ENCODE measurements at regions of chr4 and their contacts with region 1.

Region 1: DNA sequence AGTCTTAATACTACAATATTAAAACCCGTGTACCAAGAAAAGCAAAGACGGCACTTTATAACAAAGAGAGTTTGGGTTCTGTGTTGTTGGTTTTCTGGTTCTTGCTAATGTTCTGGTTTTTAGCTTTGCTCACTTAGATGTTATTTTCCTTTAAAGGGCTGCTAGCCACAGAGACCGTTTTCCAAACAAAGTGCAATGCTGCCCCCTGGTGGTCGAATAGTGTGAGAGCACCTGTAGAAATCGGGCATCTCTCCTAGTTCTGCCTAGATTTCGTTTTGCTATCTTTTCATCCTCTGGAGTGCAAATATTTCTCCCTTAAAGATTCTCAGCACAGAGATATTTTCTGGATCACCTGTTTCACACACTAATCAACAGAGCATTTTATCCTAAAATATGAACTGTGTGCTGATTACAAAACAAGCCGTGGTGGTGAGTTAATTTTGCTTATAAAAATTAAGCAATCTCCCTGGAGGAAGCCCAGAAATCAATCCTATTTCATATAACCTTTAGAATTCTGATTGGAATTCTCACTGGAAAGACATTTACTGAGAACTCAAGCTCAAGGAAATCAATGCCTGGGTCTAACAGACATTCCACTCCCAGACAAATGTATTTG is 334.5 kb upstream of the NOCT start:
- DNase-seq: peak; percentile 77
- ATAC-seq: peak; percentile 65

Region 2: DNA sequence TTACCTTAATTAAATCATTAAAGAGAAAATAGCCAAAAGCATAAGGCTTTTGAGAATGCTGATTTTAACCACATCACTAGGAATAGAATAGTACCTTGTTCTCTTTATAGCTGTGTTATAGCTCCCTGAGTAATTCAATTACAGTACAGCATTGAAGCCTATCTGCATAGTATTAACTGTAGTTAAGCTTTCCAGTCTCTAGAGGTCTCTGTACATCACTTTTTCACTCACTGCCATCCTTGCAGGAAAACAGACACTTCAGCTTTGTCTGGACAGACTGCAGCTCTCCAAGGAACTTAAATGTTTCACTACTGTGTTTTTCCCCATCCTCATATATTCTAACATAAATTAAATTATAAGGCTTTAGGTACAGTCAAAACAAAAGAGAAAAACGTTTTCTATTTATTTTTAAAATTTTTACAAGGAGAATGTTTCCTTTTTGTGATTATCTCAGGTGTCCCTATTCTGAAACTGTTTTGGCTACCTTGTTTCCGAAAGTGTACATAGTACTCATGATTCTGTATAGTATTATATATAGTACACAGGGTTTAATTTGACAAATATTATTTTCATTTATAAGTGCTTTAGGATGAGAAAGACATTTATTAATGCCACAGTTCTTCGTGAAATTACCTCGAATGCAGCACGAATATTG is 1556.7 kb before region 1 on chr4:
- intact Hi-C with region 1: loop called (anchors 10 kb)
- DNase-seq: no peak
- ATAC-seq: peak; percentile 91

Region 3: GRCh38 chr4:138035781-138036258 is 645.3 kb before region 1 on chr4:
- intact Hi-C with region 1: loop called (anchors 1 kb)
- DNase-seq: no peak
- ATAC-seq: peak; percentile 80

Region 4: GRCh38 chr4:138182838-138183426 is 498.2 kb before region 1 on chr4:
- intact Hi-C with region 1: loop called (anchors 2 kb)
- DNase-seq: no peak
- ATAC-seq: peak; percentile 44

Region 5: GRCh38 chr4:138225477-138225876 is 455.6 kb before region 1 on chr4:
- intact Hi-C with region 1: no loop called
- DNase-seq: no peak
- ATAC-seq: no peak

Region 6: DNA sequence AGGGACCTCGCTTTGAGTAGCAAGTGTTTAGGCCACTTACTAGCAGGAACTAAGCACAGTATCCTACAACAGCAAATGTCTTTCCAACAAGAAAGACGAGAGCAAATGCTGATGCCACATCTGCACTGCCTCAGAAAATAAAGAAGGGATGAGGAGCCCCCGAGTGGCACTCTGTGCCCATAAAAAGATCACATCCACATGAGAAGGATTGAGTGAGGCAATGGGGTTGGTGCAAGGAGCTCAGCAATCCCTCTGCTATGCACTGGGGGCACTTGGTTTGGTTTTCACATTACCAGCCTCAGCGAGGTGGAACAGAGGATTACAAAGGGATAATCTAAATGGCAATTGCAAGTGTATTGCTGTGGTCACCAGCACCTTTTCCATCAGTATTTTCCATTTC is 186.2 kb before region 1 on chr4:
- intact Hi-C with region 1: loop called (anchors 10 kb)
- DNase-seq: no peak
- ATAC-seq: peak; percentile 60

Region 7: GRCh38 chr4:138535316-138535715 is 145.8 kb before region 1 on chr4:
- intact Hi-C with region 1: no loop called
- DNase-seq: no peak
- ATAC-seq: no peak

Region 8: DNA sequence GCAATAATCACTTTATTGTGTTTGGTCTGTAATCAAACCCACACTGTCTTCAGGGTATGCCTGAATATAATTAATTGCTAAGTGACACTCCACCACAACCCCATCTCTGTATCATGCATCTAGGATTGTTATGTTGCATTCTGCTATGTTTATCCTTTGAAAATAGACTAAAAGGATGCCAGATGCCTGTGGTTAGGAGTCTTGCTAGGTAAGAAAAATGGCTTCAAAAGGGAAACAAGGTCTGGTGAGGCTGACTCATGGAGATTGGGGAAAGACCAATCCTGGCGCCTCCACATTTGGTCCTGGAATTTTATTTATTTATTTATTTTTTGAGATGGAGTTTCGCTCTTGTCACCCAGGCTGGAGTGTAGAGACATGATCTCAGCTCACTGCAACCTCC is 78.4 kb before region 1 on chr4:
- intact Hi-C with region 1: no loop called
- DNase-seq: no peak
- ATAC-seq: no peak

Region 9: DNA sequence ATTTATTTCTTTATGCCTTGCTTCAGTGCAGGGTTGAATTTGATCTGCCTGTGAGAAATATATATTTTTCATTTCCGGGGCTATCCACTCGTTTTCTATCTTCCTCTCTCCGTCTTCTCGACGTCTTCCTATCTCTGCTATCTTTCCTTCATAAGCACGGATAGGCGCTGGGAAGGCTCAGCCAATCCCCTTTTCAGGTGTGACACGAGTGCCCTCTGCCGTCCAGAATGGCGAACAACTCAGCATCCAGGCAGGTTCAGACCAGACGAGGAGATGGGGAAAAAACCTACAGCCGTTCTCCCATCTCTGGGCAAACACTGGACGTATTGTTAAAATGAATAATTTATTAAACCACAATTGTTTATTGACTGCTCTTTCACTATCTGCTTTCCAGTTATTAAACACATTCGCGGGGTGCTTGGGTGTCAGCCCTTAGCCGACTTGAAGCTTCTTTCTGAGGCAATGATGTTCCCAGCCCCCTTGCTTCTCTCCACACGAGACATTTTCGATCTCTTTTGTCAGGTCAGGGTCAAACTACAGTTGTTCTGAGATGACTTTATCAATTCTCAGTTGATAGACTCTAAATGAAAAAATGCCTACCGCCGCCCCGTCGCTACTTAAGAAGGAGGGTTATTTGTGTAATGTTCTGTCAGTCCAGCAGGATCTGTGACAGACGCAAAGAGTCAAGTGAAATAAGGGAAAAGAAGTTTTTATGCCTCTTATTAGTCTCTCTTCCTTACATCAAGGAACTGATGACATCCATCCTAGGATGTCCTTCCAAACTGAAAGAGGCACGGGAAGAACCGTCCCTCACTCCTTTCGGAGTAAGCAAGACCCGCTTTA is 238.2 kb after region 1 on chr4:
- intact Hi-C with region 1: loop called (anchors 5 kb)
- DNase-seq: peak; percentile 85
- ATAC-seq: peak; percentile 93